Aorta (tissue), 5 donors: ENCODE measurements at regions of chr4 and their contacts with region 1.

Region 1: GRCh38 chr4:61200187-61200915 is at the start of gene ADGRL3:
- DNase-seq: peak; percentile 47 to 85
- ATAC-seq: peak; percentile 74
- H3K4me3 ChIP-seq: peak within 1 kb of the TSS; percentile 92 to 96
- H3K27ac ChIP-seq: peak within 1 kb of the TSS in 1 of 2 donors; percentile 1
- H3K4me1 ChIP-seq: no peaks in the 10 kb centered on the region
- H3K27me3 ChIP-seq: no peaks in the 10 kb centered on the region
- total RNA-seq, gene ADGRL3: 26.7 to 110 TPM

Region 2: DNA sequence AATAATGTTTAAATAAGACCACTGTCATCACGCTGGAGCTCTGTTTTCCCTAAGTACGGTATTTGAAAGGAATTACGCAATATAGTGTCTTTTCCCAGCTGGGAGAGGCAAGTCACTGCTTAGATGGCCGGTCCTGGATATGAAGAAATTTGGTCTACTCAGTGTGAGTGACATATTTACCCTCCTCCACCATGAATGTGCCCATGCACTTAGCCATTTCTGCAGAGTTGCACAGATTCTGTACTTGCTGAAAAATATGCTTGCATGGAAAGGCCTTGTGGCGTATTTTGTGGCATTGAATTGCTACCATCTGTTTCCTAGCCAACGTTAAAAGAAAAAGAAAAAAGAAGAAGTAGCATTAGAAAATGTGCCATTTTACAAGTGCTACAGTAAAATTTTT is 72.9 kb after region 1 on chr4:
- intact Hi-C with region 1: loop called in 1 of 2 experiments (anchors 10 kb)
- DNase-seq: no peak
- ATAC-seq: peak; percentile 65
- H3K4me3 ChIP-seq: no peak overlapping the region
- H3K27ac ChIP-seq: no peak overlapping the region
- H3K4me1 ChIP-seq: peaks cover 2 to 12% of the 10 kb centered on the region in 2 donors
- H3K27me3 ChIP-seq: no peaks in the 10 kb centered on the region

Region 3: GRCh38 chr4:61380865-61381264 is 180.5 kb after region 1 on chr4:
- intact Hi-C with region 1: no loop called
- DNase-seq: no peak
- ATAC-seq: no peak
- H3K4me3 ChIP-seq: no peak overlapping the region
- H3K27ac ChIP-seq: no peak overlapping the region
- H3K4me1 ChIP-seq: no peaks in the 10 kb centered on the region
- H3K27me3 ChIP-seq: no peaks in the 10 kb centered on the region

Region 4: GRCh38 chr4:61661960-61662359 is 461.6 kb after region 1 on chr4:
- intact Hi-C with region 1: no loop called
- DNase-seq: no peak
- ATAC-seq: no peak
- H3K4me3 ChIP-seq: no peak overlapping the region
- H3K27ac ChIP-seq: no peak overlapping the region
- H3K4me1 ChIP-seq: no peaks in the 10 kb centered on the region
- H3K27me3 ChIP-seq: no peaks in the 10 kb centered on the region